ENCODE measurements at regions of chr1 and their contacts with region 1.

Region 1: GRCh38 chr1:99808391-99809115 is 41.6 kb upstream of the AGL start:
- DNase-seq: no peak
- ATAC-seq: peak; percentile 90
- H3K4me3 ChIP-seq: peak overlapping the region; percentile 26 to 40
- H3K27ac ChIP-seq: no peak overlapping the region
- H3K4me1 ChIP-seq: no peaks in the 10 kb centered on the region
- H3K27me3 ChIP-seq: no peaks in the 10 kb centered on the region

Region 2: GRCh38 chr1:99570486-99571103 is 238.0 kb before region 1 on chr1:
- intact Hi-C with region 1: no loop called
- DNase-seq: no peak
- ATAC-seq: no peak
- H3K4me3 ChIP-seq: no peak overlapping the region
- H3K27ac ChIP-seq: no peak overlapping the region
- H3K4me1 ChIP-seq: no peaks in the 10 kb centered on the region
- H3K27me3 ChIP-seq: no peaks in the 10 kb centered on the region

Region 3: GRCh38 chr1:100132566-100133477 is 324.3 kb after region 1 on chr1 and contains the starts of genes SASS6 and TRMT13:
- intact Hi-C with region 1: loop called in 1 of 2 experiments (anchors 10 kb)
- DNase-seq: peak; percentile 98
- ATAC-seq: peak; percentile 100
- H3K4me3 ChIP-seq: peak within 1 kb of the TSS; percentile 78 to 91
- H3K27ac ChIP-seq: peak within 1 kb of the TSS in 1 of 2 donors; percentile 16
- H3K4me1 ChIP-seq: peaks cover 0 to 2% of the 10 kb centered on the region in 2 donors
- H3K27me3 ChIP-seq: no peaks in the 10 kb centered on the region
- total RNA-seq, gene SASS6: 2.1 to 2.5 TPM
- total RNA-seq, gene TRMT13: 11.7 to 18.4 TPM